Transverse colon (tissue), 4 donors: ENCODE measurements at regions of chr7 and their contacts with region 1.

Region 1: GRCh38 chr7:44867073-44867995 is 18.0 kb downstream of the PURB start:
- DNase-seq: no peak
- H3K4me3 ChIP-seq: no peak overlapping the region
- H3K27ac ChIP-seq: peak overlapping the region; percentile 32 to 58 (median 54)
- H3K4me1 ChIP-seq: peaks cover 0 to 10% (median 0%) of the 10 kb centered on the region in 4 donors
- H3K27me3 ChIP-seq: no peaks in the 10 kb centered on the region
- CTCF ChIP-seq: no peak
- EP300 ChIP-seq: no peak
- POLR2A ChIP-seq: no peak

Region 2: GRCh38 chr7:44914992-44915607 is 47.8 kb after region 1 on chr7:
- in situ Hi-C with region 1: loop called in 2 of 4 experiments (anchors 10 kb)
- intact Hi-C with region 1: no loop called
- DNase-seq: no peak
- H3K4me3 ChIP-seq: no peak overlapping the region
- H3K27ac ChIP-seq: no peak overlapping the region
- H3K4me1 ChIP-seq: no peaks in the 10 kb centered on the region
- H3K27me3 ChIP-seq: no peaks in the 10 kb centered on the region
- CTCF ChIP-seq: no peak
- EP300 ChIP-seq: no peak
- POLR2A ChIP-seq: no peak

Region 3: DNA sequence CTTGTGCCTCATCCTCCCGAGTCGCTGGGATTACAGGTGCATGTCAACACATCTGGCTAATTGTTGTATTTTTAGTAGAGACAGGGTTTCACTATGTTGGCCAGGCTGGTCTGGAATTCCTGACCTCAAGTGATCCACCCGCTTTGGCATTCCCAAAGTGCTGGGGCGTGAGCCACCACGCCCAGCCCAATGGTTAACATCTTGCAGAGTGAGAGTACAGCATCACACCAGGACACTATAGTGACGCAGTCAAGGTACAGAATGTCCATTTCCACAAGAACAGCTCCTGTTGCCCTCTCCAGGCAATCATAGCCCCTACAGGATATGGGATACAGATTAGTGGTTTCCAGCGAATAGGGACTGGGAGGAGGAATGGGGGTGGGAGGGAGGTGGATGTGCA is 77.5 kb after region 1 on chr7:
- in situ Hi-C with region 1: no loop called
- intact Hi-C with region 1: no loop called
- DNase-seq: no peak
- H3K4me3 ChIP-seq: no peak overlapping the region
- H3K27ac ChIP-seq: no peak overlapping the region
- H3K4me1 ChIP-seq: no peaks in the 10 kb centered on the region
- H3K27me3 ChIP-seq: no peaks in the 10 kb centered on the region
- CTCF ChIP-seq: no peak
- EP300 ChIP-seq: no peak
- POLR2A ChIP-seq: no peak